ENCODE measurements at regions of chr12 and their contacts with region 1.

Region 1: DNA sequence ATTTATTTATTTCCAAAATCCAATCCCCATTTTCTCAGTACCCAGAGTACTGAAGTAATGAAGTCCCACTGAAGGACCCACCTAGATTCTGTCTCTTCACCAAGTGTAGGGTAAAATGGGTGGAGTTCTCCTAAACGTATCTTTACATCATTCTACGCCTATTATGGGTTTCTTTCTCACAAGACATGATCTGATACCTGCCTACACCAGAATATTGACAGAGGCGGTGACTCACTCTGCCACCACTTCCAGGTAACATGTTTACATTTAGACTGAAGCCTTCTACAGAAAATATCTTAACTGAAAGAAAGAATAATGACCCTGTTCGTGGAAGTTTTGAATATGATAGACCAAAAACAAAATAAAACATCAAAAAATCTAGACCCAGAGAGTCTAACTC is 89.8 kb downstream of the BTG1 start:
- DNase-seq: no peak
- H3K4me3 ChIP-seq: no peak overlapping the region
- H3K27ac ChIP-seq: no peak overlapping the region
- H3K4me1 ChIP-seq: no peaks in the 10 kb centered on the region
- H3K27me3 ChIP-seq: no peaks in the 10 kb centered on the region
- CTCF ChIP-seq: no peak
- POLR2A ChIP-seq: no peak

Region 2: GRCh38 chr12:92003701-92004100 is 52.2 kb before region 1 on chr12:
- intact Hi-C with region 1: loop called (anchors 2 kb)
- DNase-seq: no peak
- H3K4me3 ChIP-seq: no peak overlapping the region
- H3K27ac ChIP-seq: no peak overlapping the region
- H3K4me1 ChIP-seq: no peaks in the 10 kb centered on the region
- H3K27me3 ChIP-seq: no peaks in the 10 kb centered on the region
- CTCF ChIP-seq: no peak
- POLR2A ChIP-seq: no peak